ENCODE measurements at regions of chr1 and their contacts with region 1.

Region 1: DNA sequence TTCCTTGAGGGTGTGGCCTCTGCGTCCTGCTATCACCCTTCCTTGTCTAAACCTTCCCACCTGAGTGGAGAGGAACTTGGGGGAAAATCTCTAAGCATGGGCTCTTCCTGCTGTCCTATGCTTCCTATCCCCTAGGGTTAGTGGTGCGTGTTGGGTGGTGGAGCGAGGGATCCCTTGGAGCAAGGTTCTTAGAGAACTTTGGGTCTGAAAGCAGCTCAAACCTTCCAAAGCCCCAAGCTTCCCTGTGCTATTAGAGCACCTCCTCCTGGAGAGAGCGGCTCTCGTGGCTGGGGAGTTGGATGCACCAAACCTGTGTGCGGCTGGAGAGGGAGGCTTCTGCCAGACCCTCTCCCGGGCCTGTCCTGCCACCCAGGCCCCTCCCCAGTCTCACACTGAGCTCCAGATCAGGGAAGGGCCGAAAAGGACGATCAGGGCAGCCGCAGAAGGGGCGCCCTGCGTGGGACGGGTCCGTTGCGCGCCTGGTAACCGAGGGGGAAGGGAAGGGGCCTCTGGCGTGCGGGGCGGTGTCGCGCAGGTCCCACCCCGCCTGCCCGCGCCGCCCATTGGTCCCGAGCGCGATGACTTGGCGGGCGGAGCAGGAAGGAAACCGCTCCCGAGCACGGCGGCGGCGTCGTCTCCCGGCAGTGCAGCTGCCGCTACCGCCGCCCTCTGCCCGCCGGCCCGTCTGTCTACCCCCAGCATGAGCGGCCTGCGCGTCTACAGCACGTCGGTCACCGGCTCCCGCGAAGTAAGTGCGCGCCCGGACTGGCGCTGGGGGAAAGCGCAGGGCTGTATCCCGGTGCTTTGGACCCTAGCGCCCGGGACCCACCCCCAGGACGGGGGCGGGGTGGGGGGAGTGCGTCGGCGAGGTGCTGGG is at the start of gene SH3BGRL3:
- DNase-seq: peak; percentile 93
- H3K4me3 ChIP-seq: peak within 1 kb of the TSS; percentile 71 to 85 (median 79)
- H3K27ac ChIP-seq: peak within 1 kb of the TSS; percentile 93 to 98 (median 96)
- H3K4me1 ChIP-seq: peaks cover 46 to 77% (median 63%) of the 10 kb centered on the region in 4 donors
- H3K27me3 ChIP-seq: no peaks in the 10 kb centered on the region
- CTCF ChIP-seq: peak in 3 of 5 experiments; percentile 27 to 43 (median 42)
- EP300 ChIP-seq: peak; percentile 44
- POLR2A ChIP-seq: peak; percentile 99
- total RNA-seq, gene SH3BGRL3: 134 to 314 (median 215) TPM

Region 2: DNA sequence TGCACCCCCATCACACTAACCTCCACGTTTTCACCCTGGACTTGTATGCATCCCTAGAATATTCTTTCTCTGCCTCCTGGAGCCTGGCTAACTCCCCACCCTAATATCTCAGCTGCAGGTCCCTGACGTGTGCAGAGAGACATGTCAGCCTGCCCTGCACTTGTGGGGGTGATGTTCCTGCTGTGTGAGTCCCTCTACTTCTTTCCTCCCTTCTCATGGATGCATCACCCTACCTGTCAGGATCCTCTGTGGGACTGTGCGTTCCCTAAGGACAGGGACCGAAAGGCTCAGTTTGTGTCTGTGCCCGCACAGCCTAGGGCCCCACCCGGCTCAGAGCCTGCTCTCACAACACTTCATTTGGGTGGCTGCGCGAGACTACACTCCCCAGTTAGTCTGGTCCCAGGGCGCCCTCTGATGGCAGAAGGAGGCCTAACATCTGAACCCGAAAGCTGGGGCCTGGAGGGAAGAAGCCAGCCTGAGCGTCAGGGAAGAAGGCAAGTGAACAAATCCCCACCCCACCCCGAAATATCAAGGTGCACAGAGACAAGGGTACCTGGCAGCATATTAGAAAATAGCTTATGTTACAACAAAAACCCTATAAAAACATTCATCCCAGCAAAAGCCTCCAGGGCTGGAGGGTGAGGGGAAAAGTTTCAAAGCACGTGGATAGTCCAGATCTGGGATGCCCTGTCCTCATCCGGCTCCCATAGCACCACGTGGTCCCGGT is 41.8 kb after region 1 on chr1:
- in situ Hi-C with region 1: loop called (anchors 5 to 10 kb)
- intact Hi-C with region 1: loop called (anchors 2 kb)
- DNase-seq: peak; percentile 96
- H3K4me3 ChIP-seq: no peak overlapping the region
- H3K27ac ChIP-seq: peak overlapping the region in 2 of 4 donors; percentile 5 to 13
- H3K4me1 ChIP-seq: peaks cover 4 to 11% (median 6%) of the 10 kb centered on the region in 4 donors
- H3K27me3 ChIP-seq: no peaks in the 10 kb centered on the region
- CTCF ChIP-seq: peak; percentile 84 to 96 (median 91)
- EP300 ChIP-seq: no peak
- POLR2A ChIP-seq: no peak

Region 3: DNA sequence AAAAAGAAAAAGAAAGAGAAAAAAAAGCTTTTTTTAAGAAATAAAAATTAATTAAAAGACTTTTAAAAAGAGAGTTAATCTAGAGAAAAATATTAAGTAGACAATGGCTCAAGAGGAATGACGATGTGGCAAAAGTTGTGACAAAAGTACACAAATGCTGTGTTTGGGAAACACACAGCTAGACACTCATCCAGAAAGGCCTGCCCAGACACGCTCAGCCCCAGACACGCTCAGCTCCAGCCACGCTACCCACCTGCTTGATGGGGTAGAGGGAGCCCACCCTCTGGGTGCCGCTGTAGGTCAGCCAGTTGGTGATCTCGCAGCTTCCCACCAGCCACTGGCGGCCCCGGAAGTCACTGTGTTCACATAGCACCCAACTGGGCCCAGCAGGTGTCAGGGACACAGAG is 48.3 kb after region 1 on chr1:
- in situ Hi-C with region 1: loop called (anchors 5 to 10 kb)
- intact Hi-C with region 1: no loop called
- DNase-seq: no peak
- H3K4me3 ChIP-seq: no peak overlapping the region
- H3K27ac ChIP-seq: no peak overlapping the region
- H3K4me1 ChIP-seq: no peaks in the 10 kb centered on the region
- H3K27me3 ChIP-seq: peaks cover 17% of the 10 kb centered on the region
- CTCF ChIP-seq: no peak
- EP300 ChIP-seq: no peak
- POLR2A ChIP-seq: no peak